ENCODE measurements at regions of chrX and their contacts with region 1.

Region 1: GRCh38 chrX:38754102-38754790 is 47.0 kb upstream of the MID1IP1 start:
- DNase-seq: peak; percentile 22
- CTCF ChIP-seq: peak; percentile 64

Region 2: GRCh38 chrX:38985375-38985774 is 231.1 kb after region 1 on chrX:
- in situ Hi-C with region 1: loop called (anchors 10 kb)
- DNase-seq: peak; percentile 50
- CTCF ChIP-seq: peak; percentile 14

Region 3: GRCh38 chrX:39149761-39150160 is 395.5 kb after region 1 on chrX:
- in situ Hi-C with region 1: loop called (anchors 25 kb)
- DNase-seq: no peak
- CTCF ChIP-seq: peak; percentile 71